ENCODE measurements at regions of chr4 and their contacts with region 1.

Region 1: GRCh38 chr4:100299046-100299840 is 109.0 kb upstream of the DDIT4L start:
- DNase-seq: peak; percentile 96
- ATAC-seq: peak; percentile 94
- H3K4me3 ChIP-seq: no peak overlapping the region
- H3K27ac ChIP-seq: peak overlapping the region; percentile 54; the same call in 1 of the 2 replicates
- H3K4me1 ChIP-seq: peaks cover 2% of the 10 kb centered on the region; the same call in 1 of the 2 replicates
- H3K27me3 ChIP-seq: no peaks in the 10 kb centered on the region
- CTCF ChIP-seq: no peak
- POLR2A ChIP-seq: no peak
- RAD21 ChIP-seq: no peak

Region 2: DNA sequence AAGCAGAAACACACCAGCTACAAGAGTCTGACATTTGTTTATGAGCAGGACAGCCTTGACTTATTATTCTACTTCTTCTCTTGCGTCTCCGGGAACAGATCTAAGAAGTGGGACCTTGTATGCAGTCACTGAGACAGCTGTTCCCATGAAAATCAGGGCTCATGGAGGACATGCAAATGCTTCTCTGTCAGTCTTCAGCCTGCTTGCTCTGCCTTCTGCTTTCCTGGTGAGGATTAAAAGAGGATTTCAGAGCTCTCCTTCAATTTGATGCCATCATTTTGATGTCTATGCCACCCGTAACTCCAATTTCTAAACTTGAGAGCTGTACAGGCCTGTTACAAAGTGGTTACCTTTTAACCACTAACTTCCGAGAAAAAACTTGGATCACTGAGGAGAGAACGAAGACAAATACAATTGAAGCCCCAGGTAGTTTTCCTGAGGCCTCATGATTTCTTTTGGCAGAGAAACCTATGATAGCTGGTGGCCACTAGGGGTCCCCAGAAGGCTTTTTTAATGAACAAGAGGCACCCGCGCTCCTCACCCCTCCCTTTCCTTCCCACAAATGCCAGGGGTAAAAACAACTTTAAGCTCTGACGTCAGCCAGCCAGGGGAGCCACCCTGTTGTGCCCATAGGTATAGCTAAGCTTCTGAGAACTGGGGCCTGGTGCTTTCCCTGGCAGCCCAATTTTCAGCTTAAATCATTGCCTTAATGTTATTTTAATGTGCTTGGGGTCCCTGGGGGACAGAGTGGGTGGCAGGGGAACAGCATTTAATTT is 206.0 kb before region 1 on chr4:
- CTCF ChIA-PET with region 1: no interaction called
- POLR2A ChIA-PET with region 1: no interaction called
- dilution Hi-C with region 1: no loop called
- in situ Hi-C with region 1: no loop called
- intact Hi-C with region 1: loop called (anchors 5 kb)
- DNase-seq: peak; percentile 82
- ATAC-seq: peak; percentile 87
- H3K4me3 ChIP-seq: no peak overlapping the region
- H3K27ac ChIP-seq: no peak overlapping the region
- H3K4me1 ChIP-seq: peaks cover 3% of the 10 kb centered on the region
- H3K27me3 ChIP-seq: no peaks in the 10 kb centered on the region
- CTCF ChIP-seq: peak; percentile 78
- POLR2A ChIP-seq: no peak
- RAD21 ChIP-seq: peak; percentile 76

Region 3: DNA sequence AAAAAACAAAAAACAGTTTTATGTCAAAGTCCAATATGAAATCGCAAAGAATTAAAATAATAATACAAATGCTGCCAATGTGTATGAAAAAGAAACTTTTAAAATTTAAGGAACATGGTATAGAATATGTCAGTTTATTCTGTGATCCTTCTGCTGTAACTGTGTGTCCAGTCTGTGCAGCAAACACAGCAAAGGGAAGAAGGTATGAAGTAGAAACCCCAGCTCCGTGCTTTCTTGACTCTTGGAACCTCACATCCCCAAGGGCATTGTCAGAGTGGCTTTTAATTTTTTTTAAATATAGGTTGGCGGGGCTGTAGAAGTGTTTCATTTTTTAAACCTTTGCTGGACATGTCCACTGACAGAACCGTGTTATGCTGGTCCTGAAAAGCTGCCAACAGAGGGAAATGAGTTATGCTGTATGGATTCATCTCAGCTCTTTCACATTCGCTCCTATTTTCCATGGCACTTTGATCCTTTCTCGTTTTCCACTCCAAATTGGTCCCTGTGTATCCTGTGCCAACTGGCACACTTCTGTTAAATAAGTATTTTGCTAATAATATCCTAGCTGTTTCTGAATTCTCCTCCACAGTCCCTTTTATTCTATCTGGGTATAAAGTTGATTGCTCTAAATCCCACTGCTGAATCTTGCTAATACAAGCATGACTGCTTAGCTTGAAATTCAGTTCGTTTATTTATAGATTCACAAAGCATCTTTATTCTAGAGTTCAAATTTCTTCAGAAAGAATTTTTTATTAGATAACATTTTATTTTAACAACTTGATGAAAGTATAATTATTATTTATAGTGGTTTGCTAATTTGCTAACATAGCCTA is 18.0 kb after region 1 on chr4:
- CTCF ChIA-PET with region 1: no interaction called
- POLR2A ChIA-PET with region 1: no interaction called
- dilution Hi-C with region 1: no loop called
- in situ Hi-C with region 1: no loop called
- intact Hi-C with region 1: loop called (anchors 1 kb)
- DNase-seq: peak; percentile 27
- ATAC-seq: peak; percentile 53
- H3K4me3 ChIP-seq: no peak overlapping the region
- H3K27ac ChIP-seq: peak overlapping the region; percentile 27; the same call in 1 of the 2 replicates
- H3K4me1 ChIP-seq: no peaks in the 10 kb centered on the region; the same call in 1 of the 2 replicates
- H3K27me3 ChIP-seq: no peaks in the 10 kb centered on the region
- CTCF ChIP-seq: no peak
- POLR2A ChIP-seq: no peak
- RAD21 ChIP-seq: no peak

Region 4: GRCh38 chr4:100690812-100691211 is 391.6 kb after region 1 on chr4:
- CTCF ChIA-PET with region 1: no interaction called
- POLR2A ChIA-PET with region 1: no interaction called
- dilution Hi-C with region 1: no loop called
- in situ Hi-C with region 1: no loop called
- intact Hi-C with region 1: no loop called
- DNase-seq: no peak
- ATAC-seq: no peak
- H3K4me3 ChIP-seq: no peak overlapping the region
- H3K27ac ChIP-seq: no peak overlapping the region
- H3K4me1 ChIP-seq: no peaks in the 10 kb centered on the region
- H3K27me3 ChIP-seq: no peaks in the 10 kb centered on the region
- CTCF ChIP-seq: no peak
- POLR2A ChIP-seq: no peak
- RAD21 ChIP-seq: no peak